GM12878 (cell line): ENCODE measurements at regions of chr5 and their contacts with region 1.

Region 1: DNA sequence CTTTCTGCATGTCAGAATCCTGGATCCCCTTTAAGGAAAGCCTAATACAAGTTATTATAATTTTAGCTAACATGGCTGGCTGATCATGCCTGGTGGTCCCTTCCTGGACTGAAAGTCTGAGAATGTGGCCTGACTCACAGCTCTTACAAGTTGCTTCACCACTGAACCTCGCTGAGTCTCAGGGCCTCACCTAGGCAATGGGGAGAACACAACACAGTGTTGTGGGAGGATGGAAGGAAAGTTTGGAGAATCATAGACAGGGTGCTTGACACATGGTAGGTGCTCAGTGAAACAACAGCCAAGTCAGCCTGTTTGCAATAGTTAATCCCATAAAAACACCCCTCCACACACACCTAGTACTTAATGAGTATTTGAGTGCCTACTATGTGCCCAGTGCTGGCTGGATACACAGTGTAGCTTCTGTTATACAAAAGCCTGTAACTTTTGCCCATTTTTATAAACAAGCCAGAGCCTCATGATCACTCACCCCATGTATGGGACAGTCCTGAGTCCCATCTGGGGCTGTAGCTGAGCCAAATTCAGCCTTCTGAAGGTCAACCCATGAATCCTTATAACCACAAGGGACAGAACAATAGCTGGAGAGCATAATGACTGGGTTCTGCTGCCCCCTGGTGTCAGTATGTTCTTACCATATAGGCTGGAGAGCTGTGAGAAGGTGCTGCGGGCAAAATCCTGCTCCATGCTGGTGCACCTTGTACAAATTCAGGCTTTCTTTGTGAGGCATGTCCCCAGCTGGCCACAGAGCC is 3.9 kb downstream of the ACSL6 start:
- DNase-seq: peak; percentile 49
- ATAC-seq: peak; percentile 93
- H3K4me3 ChIP-seq: no peak overlapping the region
- H3K27ac ChIP-seq: no peak overlapping the region
- H3K4me1 ChIP-seq: no peaks in the 10 kb centered on the region; the same call in 1 of the 2 replicates
- H3K27me3 ChIP-seq: peaks cover 16 to 17% of the 10 kb centered on the region in 2 experiments; a peak in 3 of 4 replicates
- CTCF ChIP-seq: peak; percentile 68 to 77 (median 76); a peak in 5 of 6 replicates
- EP300 ChIP-seq: no peak
- POLR2A ChIP-seq: no peak
- RAD21 ChIP-seq: peak; percentile 91

Region 2: DNA sequence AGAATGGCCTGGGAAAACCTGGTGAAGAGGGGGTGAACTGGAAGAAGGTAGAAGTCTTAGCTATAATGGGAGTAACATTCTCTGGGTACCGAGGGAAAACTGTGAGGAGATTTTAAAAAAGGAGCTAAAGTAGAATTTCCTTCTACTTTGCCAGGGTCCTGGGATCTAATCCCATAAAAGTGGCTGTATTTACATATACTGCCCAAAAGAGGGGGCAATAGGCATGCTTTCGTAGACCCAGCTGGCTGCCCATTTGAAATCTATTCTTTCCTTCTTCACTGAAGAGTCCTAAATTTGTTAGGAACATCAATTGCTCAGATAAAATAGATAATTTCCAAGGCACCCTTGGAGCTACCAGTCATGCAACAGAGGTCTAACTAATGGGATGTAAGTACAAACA is 584.5 kb before region 1 on chr5:
- CTCF ChIA-PET with region 1: interaction called, 25 read pairs
- POLR2A ChIA-PET with region 1: no interaction called
- RAD21 ChIA-PET with region 1: interaction called, 15 read pairs
- SMC1A ChIA-PET with region 1: interaction called, 12 read pairs
- in situ Hi-C with region 1: loop called (anchors 10 kb)
- intact Hi-C with region 1: loop called (anchors 2 kb)
- DNase-seq: no peak
- ATAC-seq: no peak; the same call in 2 of the 3 replicates
- H3K4me3 ChIP-seq: no peak overlapping the region
- H3K27ac ChIP-seq: no peak overlapping the region
- H3K4me1 ChIP-seq: 0 out of 2 replicates have a peak, but pooled peaks cover 2% of the 10 kb centered on the region
- H3K27me3 ChIP-seq: no peaks in the 10 kb centered on the region
- CTCF ChIP-seq: peak; percentile 19 to 55 (median 41); a peak in 3 of 6 replicates
- EP300 ChIP-seq: no peak
- POLR2A ChIP-seq: no peak
- RAD21 ChIP-seq: peak; percentile 40; the same call in 1 of the 2 replicates

Region 3: GRCh38 chr5:131810510-131811249 is 196.9 kb before region 1 on chr5:
- CTCF ChIA-PET with region 1: interaction called, 58 read pairs
- POLR2A ChIA-PET with region 1: no interaction called
- RAD21 ChIA-PET with region 1: interaction called, 12 read pairs
- SMC1A ChIA-PET with region 1: interaction called, 15 read pairs
- in situ Hi-C with region 1: loop called (anchors 5 kb)
- intact Hi-C with region 1: loop called (anchors 1 kb)
- DNase-seq: no peak
- ATAC-seq: peak; percentile 75
- H3K4me3 ChIP-seq: no peak overlapping the region
- H3K27ac ChIP-seq: no peak overlapping the region
- H3K4me1 ChIP-seq: peaks cover 5% of the 10 kb centered on the region; the same call in 1 of the 2 replicates
- H3K27me3 ChIP-seq: no peaks in the 10 kb centered on the region
- CTCF ChIP-seq: peak; percentile 18 to 52 (median 42); a peak in 4 of 6 replicates
- EP300 ChIP-seq: no peak
- POLR2A ChIP-seq: no peak
- RAD21 ChIP-seq: peak; percentile 77

Region 4: GRCh38 chr5:131932235-131932634 is 75.3 kb before region 1 on chr5:
- CTCF ChIA-PET with region 1: no interaction called
- POLR2A ChIA-PET with region 1: no interaction called
- RAD21 ChIA-PET with region 1: no interaction called
- SMC1A ChIA-PET with region 1: no interaction called
- in situ Hi-C with region 1: no loop called
- intact Hi-C with region 1: no loop called
- DNase-seq: no peak
- ATAC-seq: no peak
- H3K4me3 ChIP-seq: no peak overlapping the region
- H3K27ac ChIP-seq: no peak overlapping the region
- H3K4me1 ChIP-seq: no peaks in the 10 kb centered on the region
- H3K27me3 ChIP-seq: no peaks in the 10 kb centered on the region
- CTCF ChIP-seq: no peak
- EP300 ChIP-seq: no peak
- POLR2A ChIP-seq: no peak
- RAD21 ChIP-seq: no peak

Region 5: GRCh38 chr5:132114150-132115121 is 106.9 kb after region 1 on chr5:
- CTCF ChIA-PET with region 1: no interaction called
- POLR2A ChIA-PET with region 1: no interaction called
- RAD21 ChIA-PET with region 1: no interaction called
- SMC1A ChIA-PET with region 1: no interaction called
- in situ Hi-C with region 1: no loop called
- intact Hi-C with region 1: no loop called
- DNase-seq: no peak
- ATAC-seq: peak; percentile 38; the same call in 2 of the 3 replicates
- H3K4me3 ChIP-seq: no peak overlapping the region
- H3K27ac ChIP-seq: no peak overlapping the region
- H3K4me1 ChIP-seq: peaks cover 7% of the 10 kb centered on the region
- H3K27me3 ChIP-seq: no peaks in the 10 kb centered on the region
- CTCF ChIP-seq: no peak
- EP300 ChIP-seq: no peak
- POLR2A ChIP-seq: no peak
- RAD21 ChIP-seq: no peak